ENCODE measurements at regions of chr1 and their contacts with region 1.

Region 1: DNA sequence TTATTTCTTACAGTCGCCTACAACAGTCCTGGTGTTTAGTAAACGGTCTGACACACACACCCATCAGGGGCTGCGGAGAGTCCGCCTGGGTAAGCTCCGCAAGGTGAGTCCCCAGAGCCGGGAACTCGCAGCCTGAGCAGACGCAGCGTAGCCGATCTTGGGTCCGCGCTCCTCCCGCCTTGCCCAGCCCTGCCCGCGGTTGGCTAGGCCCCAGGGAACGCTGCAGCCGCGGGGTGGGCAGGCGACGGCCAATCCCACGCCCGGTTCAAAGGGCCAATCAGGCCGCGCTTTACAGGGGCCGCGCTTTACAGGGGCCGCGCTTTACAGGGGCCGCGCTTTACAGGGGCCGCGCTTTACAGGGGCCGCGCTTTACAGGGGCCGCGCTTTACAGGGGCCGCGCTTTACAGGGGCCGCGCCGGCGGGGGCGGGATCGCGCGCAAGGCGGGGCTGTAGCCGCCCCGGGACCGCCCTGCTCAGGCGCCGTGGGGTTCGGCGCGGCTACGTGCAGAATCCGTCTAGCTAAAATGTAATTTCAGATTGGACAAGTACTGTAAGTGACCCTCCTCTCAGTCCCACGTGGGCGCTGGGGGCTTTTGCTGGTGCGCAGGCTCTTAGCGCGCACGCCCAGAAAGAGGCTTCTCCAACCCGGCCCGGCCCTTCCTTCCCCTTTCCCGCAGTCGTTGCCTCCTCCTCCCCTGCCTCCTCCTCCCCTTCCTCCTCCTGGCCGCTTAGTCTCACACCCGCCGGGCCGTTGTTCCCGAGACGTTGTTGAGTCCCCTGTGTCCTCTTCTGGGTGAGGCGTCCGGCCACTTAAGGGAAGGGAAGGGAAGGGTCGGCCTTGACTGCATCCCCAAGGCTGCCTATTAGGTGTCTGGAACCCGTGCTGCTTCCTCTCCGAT is at the start of gene FGGY:
- DNase-seq: peak; percentile 97
- H3K4me3 Mint-ChIP-seq: peak within 1 kb of the TSS; percentile 89
- H3K27ac Mint-ChIP-seq: peak within 1 kb of the TSS; percentile 87
- H3K4me1 Mint-ChIP-seq: peaks cover 19% of the 10 kb centered on the region
- H3K27me3 Mint-ChIP-seq: no peaks in the 10 kb centered on the region
- CTCF ChIP-seq: no peak
- total RNA-seq, gene FGGY: 8.0 and 10.6 TPM in 2 replicates

Region 2: GRCh38 chr1:58816072-58816746 is 480.4 kb before region 1 on chr1:
- CTCF ChIA-PET with region 1: no interaction called
- POLR2A ChIA-PET with region 1: no interaction called
- intact Hi-C with region 1: loop called (anchors 1 kb)
- DNase-seq: peak; percentile 88
- H3K4me3 Mint-ChIP-seq: peak overlapping the region; percentile 78
- H3K27ac Mint-ChIP-seq: peak overlapping the region; percentile 91
- H3K4me1 Mint-ChIP-seq: peaks cover 33% of the 10 kb centered on the region
- H3K27me3 Mint-ChIP-seq: no peaks in the 10 kb centered on the region
- CTCF ChIP-seq: no peak

Region 3: GRCh38 chr1:59076612-59077011 is 220.0 kb before region 1 on chr1:
- CTCF ChIA-PET with region 1: no interaction called
- POLR2A ChIA-PET with region 1: no interaction called
- intact Hi-C with region 1: loop called (anchors 10 kb)
- DNase-seq: no peak
- H3K4me3 Mint-ChIP-seq: no peak overlapping the region
- H3K27ac Mint-ChIP-seq: no peak overlapping the region
- H3K4me1 Mint-ChIP-seq: peaks cover 11% of the 10 kb centered on the region
- H3K27me3 Mint-ChIP-seq: no peaks in the 10 kb centered on the region
- CTCF ChIP-seq: peak; percentile 20

Region 4: DNA sequence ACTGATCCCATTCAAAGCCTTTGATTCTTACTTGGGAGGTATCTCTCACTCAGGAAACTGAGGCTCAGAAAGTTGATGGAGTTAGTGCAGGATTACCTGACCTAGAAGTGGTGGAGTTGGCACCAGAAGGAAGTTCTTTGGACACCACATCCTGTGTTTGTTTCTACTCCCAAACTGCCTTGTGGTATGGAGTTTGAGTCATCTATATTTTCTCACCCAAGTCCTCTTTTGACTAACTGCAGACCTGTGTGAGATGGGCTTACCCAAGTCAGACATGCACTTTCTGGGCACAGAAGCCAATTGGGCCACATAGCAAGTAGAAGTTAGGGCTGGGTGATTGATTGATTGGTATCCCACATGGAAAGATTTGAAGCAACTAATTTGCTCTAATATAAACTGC is 36.4 kb after region 1 on chr1:
- CTCF ChIA-PET with region 1: interaction called, 6 read pairs
- POLR2A ChIA-PET with region 1: interaction called, 16 read pairs
- intact Hi-C with region 1: no loop called
- DNase-seq: peak; percentile 46
- H3K4me3 Mint-ChIP-seq: no peak overlapping the region
- H3K27ac Mint-ChIP-seq: peak overlapping the region; percentile 81
- H3K4me1 Mint-ChIP-seq: peaks cover 32% of the 10 kb centered on the region
- H3K27me3 Mint-ChIP-seq: no peaks in the 10 kb centered on the region
- CTCF ChIP-seq: no peak

Region 5: GRCh38 chr1:59427155-59427554 is 130.5 kb after region 1 on chr1:
- CTCF ChIA-PET with region 1: interaction called, 3 read pairs
- POLR2A ChIA-PET with region 1: interaction called, 4 read pairs
- intact Hi-C with region 1: loop called (anchors 5 kb)
- DNase-seq: peak; percentile 70
- H3K4me3 Mint-ChIP-seq: peak overlapping the region; percentile 35
- H3K27ac Mint-ChIP-seq: peak overlapping the region; percentile 71
- H3K4me1 Mint-ChIP-seq: peaks cover 38% of the 10 kb centered on the region
- H3K27me3 Mint-ChIP-seq: no peaks in the 10 kb centered on the region
- CTCF ChIP-seq: no peak

Region 6: GRCh38 chr1:59672851-59673572 is 376.4 kb after region 1 on chr1:
- CTCF ChIA-PET with region 1: no interaction called
- POLR2A ChIA-PET with region 1: interaction called, 13 read pairs
- intact Hi-C with region 1: loop called (anchors 5 kb)
- DNase-seq: peak; percentile 77
- H3K4me3 Mint-ChIP-seq: peak overlapping the region; percentile 59
- H3K27ac Mint-ChIP-seq: peak overlapping the region; percentile 94
- H3K4me1 Mint-ChIP-seq: peaks cover 41% of the 10 kb centered on the region
- H3K27me3 Mint-ChIP-seq: no peaks in the 10 kb centered on the region
- CTCF ChIP-seq: no peak

Region 7: GRCh38 chr1:59759156-59759925 is 462.7 kb after region 1 on chr1:
- CTCF ChIA-PET with region 1: no interaction called
- POLR2A ChIA-PET with region 1: no interaction called
- intact Hi-C with region 1: loop called (anchors 5 kb)
- DNase-seq: peak; percentile 85
- H3K4me3 Mint-ChIP-seq: peak overlapping the region; percentile 38
- H3K27ac Mint-ChIP-seq: no peak overlapping the region
- H3K4me1 Mint-ChIP-seq: peaks cover 28% of the 10 kb centered on the region
- H3K27me3 Mint-ChIP-seq: no peaks in the 10 kb centered on the region
- CTCF ChIP-seq: peak; percentile 96

Measured in MCF 10A (cell line).